OCI-LY7 (cell line): ENCODE measurements at regions of chr11 and their contacts with region 1.

Region 1: GRCh38 chr11:44104481-44105294 is 9.2 kb downstream of the EXT2 start:
- DNase-seq: no peak
- H3K4me3 ChIP-seq: no peak overlapping the region
- H3K27ac ChIP-seq: no peak overlapping the region
- H3K4me1 ChIP-seq: no peaks in the 10 kb centered on the region
- CTCF ChIP-seq: no peak

Region 2: GRCh38 chr11:44066732-44067141 is 38.0 kb before region 1 on chr11:
- CTCF ChIA-PET with region 1: no interaction called
- POLR2A ChIA-PET with region 1: no interaction called
- intact Hi-C with region 1: no loop called
- DNase-seq: no peak
- H3K4me3 ChIP-seq: no peak overlapping the region
- H3K27ac ChIP-seq: no peak overlapping the region
- H3K4me1 ChIP-seq: no peaks in the 10 kb centered on the region
- CTCF ChIP-seq: no peak

Region 3: DNA sequence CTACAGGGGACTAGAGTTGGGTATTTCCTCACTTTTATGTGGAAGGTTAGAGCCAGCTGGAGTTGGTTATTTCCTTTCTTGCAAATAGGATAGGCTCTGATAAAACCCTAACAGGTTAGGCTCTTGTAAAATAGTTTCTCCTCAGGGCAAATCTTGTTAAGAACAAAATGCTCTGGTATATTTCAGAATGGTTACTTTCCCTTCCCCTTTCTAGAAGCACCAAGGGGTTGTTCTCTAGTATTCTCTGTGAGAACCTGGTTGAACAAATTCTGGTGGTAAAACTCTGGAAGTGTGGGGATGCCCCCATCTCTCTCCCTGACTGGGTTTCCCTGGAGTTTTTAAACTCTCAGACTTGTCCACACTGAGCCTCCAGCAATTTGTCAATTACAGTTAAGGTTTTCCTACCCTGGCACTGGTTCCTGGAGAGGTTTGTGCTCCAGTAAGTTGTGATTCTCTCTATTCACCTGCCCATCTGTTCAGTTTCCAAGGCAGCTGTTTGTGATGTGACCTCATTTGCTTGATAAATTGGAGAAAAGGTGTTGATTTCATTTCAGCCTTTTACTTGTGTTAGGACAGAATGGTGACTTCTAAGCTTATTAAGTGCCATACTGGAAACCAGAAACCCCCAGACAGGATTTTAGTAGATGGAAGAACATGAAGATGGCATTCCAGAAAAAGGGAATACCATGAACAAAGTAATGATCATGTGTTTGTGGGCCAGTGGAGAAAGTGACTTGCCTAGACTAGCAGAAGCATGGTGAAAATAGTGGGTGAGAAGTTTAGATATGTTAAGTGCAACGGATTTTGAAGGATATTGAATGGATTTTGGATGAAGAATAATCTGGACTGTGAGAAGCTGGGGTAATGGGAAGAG is 55.4 kb after region 1 on chr11:
- CTCF ChIA-PET with region 1: no interaction called
- POLR2A ChIA-PET with region 1: interaction called, 3 read pairs
- intact Hi-C with region 1: loop called (anchors 10 kb)
- DNase-seq: no peak
- H3K4me3 ChIP-seq: no peak overlapping the region
- H3K27ac ChIP-seq: no peak overlapping the region
- H3K4me1 ChIP-seq: no peaks in the 10 kb centered on the region
- CTCF ChIP-seq: no peak

Region 4: DNA sequence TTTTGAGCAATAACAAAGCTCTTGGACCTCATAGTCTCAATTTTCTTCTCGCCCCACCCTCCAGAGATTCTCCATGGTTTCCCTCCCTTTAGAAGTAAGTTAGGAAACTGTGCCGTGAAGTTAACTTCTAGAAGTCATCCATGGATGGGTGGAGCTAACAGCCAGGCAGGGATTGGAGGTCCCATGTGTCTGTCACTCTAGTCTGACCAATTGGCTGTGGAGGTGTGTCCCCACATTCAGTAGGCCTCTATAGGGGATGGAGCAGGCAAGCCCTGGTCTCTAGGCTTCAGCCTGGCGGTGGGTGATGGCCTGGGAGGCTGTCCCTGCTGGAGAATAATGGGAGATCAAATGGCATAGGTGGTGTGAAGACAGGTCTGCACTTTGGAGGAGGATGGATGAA is 795.3 kb after region 1 on chr11:
- CTCF ChIA-PET with region 1: no interaction called
- POLR2A ChIA-PET with region 1: no interaction called
- intact Hi-C with region 1: loop called (anchors 10 kb)
- DNase-seq: peak; percentile 62
- H3K4me3 ChIP-seq: no peak overlapping the region
- H3K27ac ChIP-seq: no peak overlapping the region
- H3K4me1 ChIP-seq: no peaks in the 10 kb centered on the region
- CTCF ChIP-seq: no peak